ENCODE measurements at regions of chr15 and their contacts with region 1.

Region 1: GRCh38 chr15:77633134-77633912 is 611 bp upstream of the LINGO1 start:
- DNase-seq: peak; percentile 77
- H3K4me3 Mint-ChIP-seq: peak overlapping the region; percentile 42
- H3K27ac Mint-ChIP-seq: no peak overlapping the region
- H3K4me1 Mint-ChIP-seq: peaks cover 9% of the 10 kb centered on the region
- H3K27me3 Mint-ChIP-seq: peaks cover 38% of the 10 kb centered on the region

Region 2: DNA sequence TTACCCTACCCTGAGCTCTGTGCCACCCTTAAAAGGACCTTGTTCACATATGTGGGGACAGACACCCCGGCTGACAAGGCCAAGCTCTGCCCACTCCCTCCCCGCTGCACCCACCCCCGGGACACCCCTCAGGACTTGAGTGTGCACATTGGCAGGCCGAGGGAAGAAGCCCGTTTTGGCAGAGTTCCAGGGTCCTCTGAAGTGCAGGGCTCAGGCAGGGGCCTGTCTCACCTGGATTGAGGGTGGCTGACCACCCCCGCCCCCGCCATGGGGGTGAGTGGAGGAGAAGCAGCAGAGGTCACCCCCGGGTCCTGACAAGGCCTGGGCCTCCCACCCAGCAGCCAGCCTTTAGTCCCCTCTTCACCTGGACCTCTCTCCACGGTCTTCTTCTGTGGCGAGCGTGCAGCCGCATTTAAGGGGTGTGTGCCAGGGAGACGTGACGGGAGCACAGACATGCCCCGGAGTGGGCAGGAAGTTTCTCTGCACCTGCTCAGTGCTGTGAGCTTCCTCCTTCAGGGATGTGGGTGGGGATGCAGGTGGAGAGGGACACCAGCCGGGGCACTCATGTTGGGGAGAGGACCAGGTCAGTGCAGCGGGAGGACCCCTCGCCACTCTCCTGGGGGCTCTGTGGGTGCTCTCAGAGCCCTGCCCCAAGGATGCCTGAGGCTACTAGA is 51.3 kb before region 1 on chr15:
- CTCF ChIA-PET with region 1: no interaction called
- intact Hi-C with region 1: no loop called
- DNase-seq: no peak
- H3K4me3 Mint-ChIP-seq: no peak overlapping the region
- H3K27ac Mint-ChIP-seq: no peak overlapping the region
- H3K4me1 Mint-ChIP-seq: no peaks in the 10 kb centered on the region
- H3K27me3 Mint-ChIP-seq: no peaks in the 10 kb centered on the region

Region 3: GRCh38 chr15:77784395-77785292 is 151.3 kb after region 1 on chr15:
- CTCF ChIA-PET with region 1: interaction called, 9 read pairs
- intact Hi-C with region 1: loop called (anchors 1 kb)
- DNase-seq: peak; percentile 63
- H3K4me3 Mint-ChIP-seq: no peak overlapping the region
- H3K27ac Mint-ChIP-seq: no peak overlapping the region
- H3K4me1 Mint-ChIP-seq: no peaks in the 10 kb centered on the region
- H3K27me3 Mint-ChIP-seq: peaks cover 5% of the 10 kb centered on the region

Region 4: DNA sequence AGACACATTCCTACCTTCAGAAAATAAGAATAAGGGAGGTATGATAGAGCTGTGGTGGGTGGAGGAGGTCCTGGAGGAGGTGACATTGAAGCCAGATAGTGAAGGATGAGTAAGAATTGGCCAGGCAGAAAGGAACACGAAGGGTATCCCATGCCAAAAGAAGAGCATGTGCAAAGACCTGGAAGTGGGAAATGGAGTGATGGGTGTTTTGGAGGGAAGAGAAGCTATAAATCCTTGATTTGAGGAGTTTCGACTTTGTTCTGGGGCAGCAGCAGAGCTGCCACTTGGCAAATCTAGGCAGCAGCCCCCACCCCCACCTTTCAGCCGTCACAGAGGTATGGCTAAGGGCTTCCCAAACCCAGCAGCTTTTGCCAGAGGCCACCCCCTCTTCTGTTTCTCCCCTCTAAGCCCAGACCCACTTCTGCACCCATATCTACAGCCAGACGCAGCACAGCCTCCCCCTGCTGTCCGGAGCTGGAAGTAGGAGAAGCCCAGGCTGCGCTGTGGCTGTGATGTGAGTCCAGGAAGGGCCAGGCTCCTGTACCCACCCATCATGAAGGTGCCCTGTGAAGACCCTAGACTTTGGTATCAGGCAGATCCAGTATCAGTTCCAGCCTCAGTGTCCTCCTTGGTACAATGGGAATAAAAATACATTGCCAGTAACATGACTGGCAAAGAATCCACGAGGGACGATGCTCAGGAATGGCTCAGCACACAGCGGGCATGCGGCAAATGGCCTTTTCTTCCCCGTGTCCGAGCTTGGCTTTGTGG is 188.1 kb after region 1 on chr15:
- CTCF ChIA-PET with region 1: interaction called, 26 read pairs
- intact Hi-C with region 1: loop called (anchors 1 kb)
- DNase-seq: peak; percentile 65
- H3K4me3 Mint-ChIP-seq: no peak overlapping the region
- H3K27ac Mint-ChIP-seq: no peak overlapping the region
- H3K4me1 Mint-ChIP-seq: no peaks in the 10 kb centered on the region
- H3K27me3 Mint-ChIP-seq: peaks cover 35% of the 10 kb centered on the region

Region 5: GRCh38 chr15:77870195-77871065 is 237.1 kb after region 1 on chr15:
- CTCF ChIA-PET with region 1: interaction called, 3 read pairs
- intact Hi-C with region 1: loop called (anchors 1 kb)
- DNase-seq: peak; percentile 64
- H3K4me3 Mint-ChIP-seq: no peak overlapping the region
- H3K27ac Mint-ChIP-seq: no peak overlapping the region
- H3K4me1 Mint-ChIP-seq: peaks cover 2% of the 10 kb centered on the region
- H3K27me3 Mint-ChIP-seq: peaks cover 2% of the 10 kb centered on the region

Measured in activated naive CD4-positive, alpha-beta T cell treated with anti-CD3 and anti-CD28 coated beads for 36 hours (primary cell).